Dorsolateral prefrontal cortex (tissue), 120 donors: ENCODE measurements at regions of chr17 and their contacts with region 1.

Region 1: GRCh38 chr17:63425482-63425881 is 20.6 kb downstream of the CYB561 start:
- DNase-seq: peak in 9 of 10 donors; percentile 45 to 90 (median 78)
- H3K4me3 ChIP-seq: no peak overlapping the region
- H3K27ac ChIP-seq: peak overlapping the region in 9 of 59 donors; percentile 2 to 66 (median 29)
- H3K27me3 ChIP-seq: no peaks in the 10 kb centered on the region
- CTCF ChIP-seq: peak; percentile 82 to 100 (median 97)

Region 2: GRCh38 chr17:63478791-63479494 is 53.5 kb after region 1 on chr17:
- intact Hi-C with region 1: loop called in 1 of 2 experiments (anchors 1 kb)
- DNase-seq: peak in 7 of 10 donors; percentile 17 to 67 (median 55)
- H3K4me3 ChIP-seq: peak overlapping the region in 1 of 59 donors; percentile 2
- H3K27ac ChIP-seq: no peak overlapping the region
- H3K27me3 ChIP-seq: peaks cover 0 to 28% (median 0%) of the 10 kb centered on the region in 45 donors
- CTCF ChIP-seq: peak in 54 of 56 donors; percentile 25 to 72 (median 58)

Region 3: DNA sequence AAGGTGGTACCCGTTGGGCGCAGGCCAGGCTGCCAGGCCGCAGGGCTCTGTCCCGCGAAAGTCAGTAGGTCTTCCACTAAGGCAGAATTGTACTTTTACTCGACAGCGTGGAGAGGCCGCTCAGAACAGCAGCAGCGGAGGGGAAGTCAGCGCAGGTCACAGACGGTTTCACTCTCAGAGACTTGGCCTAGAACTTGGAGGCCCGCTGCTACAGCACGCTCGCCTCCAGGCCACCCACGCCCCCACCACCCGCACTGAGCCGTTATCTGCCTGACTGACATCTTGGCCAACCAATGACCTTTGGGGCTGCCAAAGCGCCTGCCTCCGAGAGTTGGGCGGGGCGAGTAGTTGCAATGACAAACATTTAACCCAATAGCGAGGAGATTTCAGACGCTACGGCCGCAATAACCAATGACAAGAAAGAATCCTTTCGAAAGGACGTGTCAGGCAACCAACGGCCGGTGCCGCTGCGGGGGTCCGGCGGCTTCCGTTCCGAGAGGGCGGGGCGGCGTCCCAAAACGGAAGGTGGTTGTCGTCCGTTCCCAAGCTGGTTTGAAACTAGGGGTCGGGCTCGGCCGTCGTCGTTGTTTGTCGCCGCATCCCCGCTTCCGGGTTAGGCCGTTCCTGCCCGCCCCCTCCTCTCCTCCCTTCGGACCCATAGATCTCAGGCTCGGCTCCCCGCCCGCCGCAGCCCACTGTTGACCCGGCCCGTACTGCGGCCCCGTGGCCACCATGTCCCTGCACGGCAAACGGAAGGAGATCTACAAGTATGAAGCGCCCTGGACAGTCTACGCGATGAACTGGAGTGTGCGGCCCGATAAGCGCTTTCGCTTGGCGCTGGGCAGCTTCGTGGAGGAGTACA is 124.7 kb after region 1 on chr17 and contains the start of gene DCAF7:
- intact Hi-C with region 1: loop called in 1 of 2 experiments (anchors 5 kb)
- DNase-seq: peak; percentile 98 to 100 (median 100)
- H3K4me3 ChIP-seq: peak within 1 kb of the TSS; percentile 62 to 100 (median 97)
- H3K27ac ChIP-seq: peak within 1 kb of the TSS; percentile 63 to 96 (median 91)
- H3K27me3 ChIP-seq: no peaks in the 10 kb centered on the region
- CTCF ChIP-seq: peak in 20 of 56 donors; percentile 9 to 47 (median 26)
- total RNA-seq, gene DCAF7: 51.7 to 77.3 (median 64.0) TPM

Region 4: DNA sequence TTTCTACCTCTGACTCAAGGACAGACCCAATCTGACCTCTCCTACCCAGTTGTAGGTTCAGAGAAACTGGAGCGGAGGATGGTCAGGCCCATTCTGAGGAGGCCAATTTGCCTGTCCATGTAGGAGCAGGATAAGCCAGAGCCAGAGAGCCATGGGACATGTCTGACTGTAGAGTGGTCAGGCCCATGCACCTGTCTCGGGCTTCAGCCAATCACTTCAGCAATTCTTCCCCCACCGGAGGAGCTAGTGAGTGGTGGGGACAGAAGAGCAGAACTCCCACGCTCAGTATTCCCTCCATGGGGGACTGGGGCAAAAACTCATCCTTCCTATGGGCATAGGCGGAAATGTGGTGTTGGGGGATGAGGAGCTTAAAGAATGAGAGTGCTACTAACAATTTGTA is 139.1 kb after region 1 on chr17:
- intact Hi-C with region 1: no loop called
- DNase-seq: no peak
- H3K4me3 ChIP-seq: no peak overlapping the region
- H3K27ac ChIP-seq: no peak overlapping the region
- H3K27me3 ChIP-seq: no peaks in the 10 kb centered on the region
- CTCF ChIP-seq: no peak

Region 5: DNA sequence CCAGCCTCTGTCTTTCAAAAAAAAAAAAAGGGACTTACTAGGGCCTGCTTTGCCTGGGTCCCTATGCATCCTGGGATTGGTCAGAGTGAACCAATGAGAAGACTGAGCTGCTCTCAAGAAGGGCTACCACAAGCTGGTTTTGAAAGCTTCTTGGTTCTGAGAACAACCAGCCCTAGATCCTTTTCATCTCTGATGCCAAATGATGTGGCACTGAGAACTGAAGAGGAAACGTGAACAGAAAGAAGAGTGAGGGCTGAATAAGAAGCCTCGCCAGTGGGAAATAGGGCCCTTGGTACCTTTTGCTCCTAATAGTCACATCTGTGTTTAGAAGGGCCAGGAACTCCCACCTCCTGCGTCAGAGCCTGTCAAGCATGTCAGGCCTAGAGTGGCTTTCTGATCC is 185.9 kb after region 1 on chr17:
- intact Hi-C with region 1: loop called (anchors 1 to 5 kb)
- DNase-seq: no peak
- H3K4me3 ChIP-seq: no peak overlapping the region
- H3K27ac ChIP-seq: peak overlapping the region in 4 of 59 donors; percentile 45 to 74 (median 56)
- H3K27me3 ChIP-seq: no peaks in the 10 kb centered on the region
- CTCF ChIP-seq: no peak

Region 6: DNA sequence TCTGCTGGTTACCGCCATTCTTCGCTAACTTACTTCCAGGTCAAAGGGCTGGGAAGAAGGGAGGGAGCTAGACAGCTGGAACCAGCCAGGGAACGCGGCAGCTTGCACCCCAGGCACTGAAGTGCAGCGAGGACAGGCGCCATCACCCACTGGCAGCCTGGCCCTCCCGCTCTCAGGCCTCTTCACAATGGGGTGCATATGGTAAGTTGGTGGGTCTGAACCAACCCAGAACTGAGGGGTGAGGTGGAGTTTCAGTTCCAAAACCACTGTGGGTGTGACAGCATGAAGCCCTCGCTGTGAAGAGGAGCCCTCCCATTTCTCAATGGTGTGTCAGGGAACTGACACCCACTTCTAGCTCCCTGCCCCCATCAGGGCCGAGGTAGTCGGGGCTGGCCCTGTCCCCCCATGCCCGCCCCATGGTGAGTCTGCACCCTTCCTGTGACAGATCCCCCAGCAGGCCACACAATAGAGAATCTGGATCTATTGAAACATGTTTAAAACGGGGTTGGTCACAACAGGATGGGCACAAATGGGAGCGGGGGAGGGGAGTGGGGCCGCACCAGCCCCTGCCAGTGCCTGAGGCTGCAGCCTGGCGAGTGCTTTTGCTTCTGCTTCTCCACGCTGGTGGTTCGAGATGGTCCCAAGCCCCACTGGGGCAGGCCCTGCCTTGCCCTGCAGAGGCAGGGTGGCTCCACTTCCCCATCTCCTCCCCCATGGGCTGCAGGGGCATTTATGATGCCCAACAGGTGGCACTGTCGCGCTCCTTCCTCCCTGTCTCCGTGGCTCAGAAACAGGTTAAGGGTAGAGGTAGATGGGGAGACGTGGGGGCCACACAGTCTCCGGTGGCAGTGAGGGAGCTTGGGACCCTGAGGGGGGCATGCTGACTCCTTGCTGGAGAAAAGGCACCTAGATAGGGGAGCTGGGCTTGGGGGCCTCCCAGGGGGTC is 272.1 kb after region 1 on chr17:
- intact Hi-C with region 1: loop called in 1 of 2 experiments (anchors 5 kb)
- DNase-seq: no peak
- H3K4me3 ChIP-seq: peak overlapping the region in 27 of 59 donors; percentile 8 to 72 (median 61)
- H3K27ac ChIP-seq: peak overlapping the region in 51 of 59 donors; percentile 19 to 95 (median 67)
- H3K27me3 ChIP-seq: no peaks in the 10 kb centered on the region
- CTCF ChIP-seq: peak in 40 of 56 donors; percentile 8 to 46 (median 24)

Region 7: GRCh38 chr17:63741221-63742049 is 316.0 kb after region 1 on chr17 and contains the start of gene STRADA:
- intact Hi-C with region 1: loop called in 1 of 2 experiments (anchors 5 kb)
- DNase-seq: peak; percentile 94 to 99 (median 97)
- H3K4me3 ChIP-seq: peak within 1 kb of the TSS; percentile 65 to 100 (median 91)
- H3K27ac ChIP-seq: peak within 1 kb of the TSS; percentile 40 to 97 (median 88)
- H3K27me3 ChIP-seq: no peaks in the 10 kb centered on the region
- CTCF ChIP-seq: peak in 31 of 56 donors; percentile 6 to 57 (median 30)
- total RNA-seq, gene STRADA: 47.3 to 105 (median 79.1) TPM

Region 8: GRCh38 chr17:63834431-63835166 is 409.1 kb after region 1 on chr17:
- intact Hi-C with region 1: loop called in 1 of 2 experiments (anchors 10 kb)
- DNase-seq: peak in 8 of 10 donors; percentile 41 to 86 (median 72)
- H3K4me3 ChIP-seq: no peak overlapping the region
- H3K27ac ChIP-seq: peak overlapping the region in 53 of 59 donors; percentile 0 to 100 (median 66)
- H3K27me3 ChIP-seq: no peaks in the 10 kb centered on the region
- CTCF ChIP-seq: peak in 55 of 56 donors; percentile 20 to 80 (median 60)